ENCODE measurements at regions of chr7 and their contacts with region 1.

Region 1: DNA sequence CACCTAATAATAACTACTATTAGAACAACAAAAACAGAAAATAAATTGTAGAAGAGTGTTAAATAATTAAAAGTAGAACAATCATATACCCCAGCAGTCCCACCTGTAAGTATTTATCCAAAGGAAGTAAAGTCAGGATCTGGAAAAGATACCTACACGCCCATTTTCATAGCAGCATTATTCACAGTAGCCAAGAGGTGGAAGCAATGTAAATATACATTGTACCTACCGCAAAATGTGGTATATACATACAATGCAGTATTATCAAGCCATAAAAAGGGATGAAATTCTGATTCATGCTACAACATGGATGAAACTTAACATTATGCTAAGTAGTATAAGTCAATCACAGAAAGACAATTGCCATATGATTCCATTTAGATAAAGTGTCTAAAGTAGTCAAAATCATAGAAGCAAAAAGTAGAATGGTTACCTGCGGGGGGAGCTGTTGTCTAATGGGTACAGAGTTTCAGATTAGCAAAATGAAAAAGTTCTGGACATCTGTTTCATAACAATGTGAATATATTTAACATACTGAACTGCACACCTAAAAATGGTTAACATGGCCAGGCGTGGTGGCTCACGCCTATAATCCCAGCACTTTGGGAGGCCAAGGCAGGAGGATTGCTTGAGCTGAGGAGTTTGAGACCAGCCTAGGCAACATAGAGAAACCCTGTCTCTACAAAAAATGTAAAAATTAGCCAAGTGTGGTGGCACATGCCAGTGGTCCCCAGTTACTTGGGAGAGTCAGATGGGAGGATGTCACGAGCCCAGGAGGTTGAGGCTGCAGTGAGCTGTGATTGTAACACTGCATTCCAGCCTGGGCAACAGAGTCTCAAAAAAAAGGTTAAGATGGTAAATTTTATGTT is 6.0 kb upstream of the TMED4 start:
- DNase-seq: no peak
- ATAC-seq: peak; percentile 84 to 88
- H3K4me3 ChIP-seq: no peak overlapping the region
- H3K27ac ChIP-seq: peak overlapping the region in 2 of 4 donors; percentile 17 to 41
- H3K4me1 ChIP-seq: peaks cover 0 to 9% of the 10 kb centered on the region in 2 donors
- H3K27me3 ChIP-seq: no peaks in the 10 kb centered on the region
- CTCF ChIP-seq: peak; percentile 58 to 77 (median 68)
- POLR2A ChIP-seq: no peak

Region 2: GRCh38 chr7:44838751-44839150 is 250.7 kb after region 1 on chr7:
- in situ Hi-C with region 1: loop called in 3 of 4 experiments (anchors 5 to 10 kb)
- intact Hi-C with region 1: no loop called
- DNase-seq: no peak
- ATAC-seq: no peak
- H3K4me3 ChIP-seq: no peak overlapping the region
- H3K27ac ChIP-seq: no peak overlapping the region
- H3K4me1 ChIP-seq: peaks cover 6 to 13% of the 10 kb centered on the region in 2 donors
- H3K27me3 ChIP-seq: no peaks in the 10 kb centered on the region
- CTCF ChIP-seq: no peak
- POLR2A ChIP-seq: no peak

Measured in gastrocnemius medialis (tissue), 4 donors.